AG04450 (cell line): ENCODE measurements at regions of chr12 and their contacts with region 1.

Region 1: DNA sequence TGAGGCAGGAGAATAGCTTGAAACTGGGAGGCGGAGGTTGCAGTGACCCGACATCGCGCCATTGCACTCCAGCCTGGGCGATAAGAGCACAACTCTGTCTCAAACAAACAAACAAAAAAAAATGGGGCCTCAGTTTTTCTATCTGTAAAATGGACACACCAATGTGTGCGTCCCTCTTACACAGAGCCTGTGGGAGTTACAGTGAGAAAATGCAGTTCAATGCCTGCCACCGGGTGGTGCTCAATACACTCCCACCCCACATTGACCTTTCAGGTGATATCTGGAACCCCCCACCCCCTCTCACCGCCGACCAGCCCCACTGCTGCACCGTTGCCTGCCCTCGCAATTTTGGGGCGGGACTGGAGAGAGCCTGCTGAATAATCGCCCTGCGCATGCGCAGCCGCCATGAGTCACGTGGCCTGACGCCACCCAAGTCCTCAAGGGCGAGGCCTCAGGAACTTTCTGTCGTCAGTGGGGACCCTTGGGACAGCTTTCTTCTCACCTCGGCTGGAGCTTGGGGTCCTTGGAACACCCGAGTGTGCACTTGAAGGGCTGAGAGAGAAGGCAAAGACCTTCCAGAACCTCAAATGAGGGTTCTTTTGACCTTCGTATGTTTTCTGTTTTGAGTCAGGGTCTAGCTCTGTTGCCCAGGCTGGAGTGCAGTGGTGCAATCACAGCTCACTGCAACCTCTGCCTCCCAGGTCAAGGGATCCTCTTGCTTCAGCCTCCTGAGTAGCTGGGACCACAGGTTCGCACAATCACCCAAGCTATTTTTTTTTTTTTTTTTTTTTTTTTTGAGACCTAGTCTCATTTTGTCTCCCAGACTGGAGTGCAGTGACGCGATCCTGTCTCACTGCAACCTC is 14.6 kb upstream of the CABP1 start:
- DNase-seq: no peak
- H3K4me3 ChIP-seq: no peak overlapping the region
- H3K27ac ChIP-seq: no peak overlapping the region
- H3K27me3 ChIP-seq: peaks cover 20% of the 10 kb centered on the region
- CTCF ChIP-seq: no peak

Region 2: GRCh38 chr12:120997448-120997847 is 371.7 kb after region 1 on chr12:
- CTCF ChIA-PET with region 1: interaction called, 16 read pairs
- POLR2A ChIA-PET with region 1: no interaction called
- DNase-seq: no peak
- H3K4me3 ChIP-seq: no peak overlapping the region
- H3K27ac ChIP-seq: no peak overlapping the region
- H3K27me3 ChIP-seq: peaks cover 10% of the 10 kb centered on the region
- CTCF ChIP-seq: no peak

Region 3: DNA sequence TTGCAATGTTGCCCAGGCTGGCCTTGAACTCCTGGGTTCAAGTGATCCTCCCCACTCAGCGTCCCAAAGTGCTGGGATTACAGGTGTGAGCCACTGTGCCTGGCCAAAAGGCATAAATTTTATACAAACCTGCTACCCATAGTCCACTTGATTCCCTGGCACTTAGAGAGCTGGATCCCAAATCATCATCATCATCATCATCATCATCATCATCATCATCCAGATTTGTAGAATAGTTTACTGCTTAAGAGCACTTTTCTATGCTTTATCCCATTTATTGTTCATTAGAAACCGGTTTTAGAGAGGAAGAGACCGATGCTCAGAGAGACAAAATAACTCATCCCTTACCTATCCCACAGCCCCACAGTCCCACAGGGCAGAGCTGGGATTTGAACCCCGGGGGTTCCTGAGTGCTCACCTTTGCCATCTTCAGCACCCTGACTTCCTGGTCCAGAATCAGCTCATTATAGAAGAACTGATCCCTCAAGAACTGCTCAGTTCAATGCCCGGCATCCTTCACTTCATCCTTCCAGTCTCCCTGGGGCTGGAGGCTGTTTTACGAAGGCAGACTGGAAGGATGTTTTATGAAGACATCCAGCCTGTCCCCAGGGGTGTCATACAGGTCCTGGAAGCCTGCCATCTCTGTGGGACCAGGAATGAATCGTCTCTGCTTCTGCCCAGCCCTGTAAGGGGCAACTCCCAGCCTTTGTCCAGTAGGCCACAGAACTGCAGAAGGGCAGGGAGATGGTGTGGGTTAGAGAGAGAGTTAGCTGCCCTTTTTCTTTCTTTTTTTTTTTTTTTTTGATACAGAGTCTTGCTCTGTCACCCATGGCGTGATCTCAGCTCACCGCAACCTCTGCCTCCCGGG is 433.5 kb after region 1 on chr12:
- CTCF ChIA-PET with region 1: no interaction called
- POLR2A ChIA-PET with region 1: no interaction called
- DNase-seq: no peak
- H3K4me3 ChIP-seq: no peak overlapping the region
- H3K27ac ChIP-seq: no peak overlapping the region
- H3K27me3 ChIP-seq: peaks cover 2% of the 10 kb centered on the region
- CTCF ChIP-seq: no peak